A549 (cell line): ENCODE measurements at regions of chr3 and their contacts with region 1.

Region 1: GRCh38 chr3:33372218-33373081 is 67.8 kb downstream of the UBP1 start:
- DNase-seq: peak; percentile 29 to 53
- ATAC-seq: peak; percentile 70 to 78
- H3K4me3 ChIP-seq: no peak overlapping the region
- H3K27ac ChIP-seq: no peak overlapping the region
- H3K4me1 ChIP-seq: peaks cover 5% of the 10 kb centered on the region; the same call in 1 of the 3 replicates
- CTCF ChIP-seq: peak; percentile 92
- EP300 ChIP-seq: no peak
- POLR2A ChIP-seq: no peak
- RAD21 ChIP-seq: peak; percentile 88 to 89

Region 2: DNA sequence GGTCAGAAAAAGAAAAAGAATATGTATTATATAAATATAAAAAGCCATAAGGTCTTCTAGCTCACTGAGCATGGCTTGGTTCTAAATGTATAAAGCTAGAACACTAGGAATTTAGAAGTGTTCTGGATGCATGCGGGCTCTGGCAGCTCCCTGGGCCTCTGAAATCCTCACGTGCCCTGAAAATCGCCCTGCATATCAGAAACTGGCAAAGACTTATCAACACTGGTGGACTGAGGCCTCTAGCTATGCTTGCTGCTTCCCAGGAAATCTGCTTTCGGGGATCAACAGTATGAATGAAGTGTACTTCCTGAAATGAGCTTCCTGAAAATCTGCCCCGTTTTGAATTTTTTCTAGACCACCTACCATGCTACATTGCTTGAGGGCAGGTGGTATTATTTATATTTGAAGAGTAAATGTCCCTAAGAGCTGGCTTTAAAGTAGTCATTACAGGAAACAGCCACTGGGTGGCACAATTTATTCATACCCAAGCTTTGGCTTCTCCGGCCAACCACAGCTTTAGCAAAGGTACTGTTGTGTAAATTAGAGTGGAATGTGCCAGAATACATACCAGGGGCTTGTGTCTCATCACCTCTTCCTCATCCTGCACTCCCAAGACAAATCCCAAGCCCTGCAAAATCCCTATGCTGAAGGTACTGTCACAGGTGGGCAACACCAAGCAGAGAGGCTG is 241.0 kb before region 1 on chr3:
- CTCF ChIA-PET with region 1: interaction called, 187 read pairs
- POLR2A ChIA-PET with region 1: interaction called, 16 read pairs
- DNase-seq: peak; percentile 67 to 77
- ATAC-seq: peak; percentile 87 to 92
- H3K4me3 ChIP-seq: no peak overlapping the region
- H3K27ac ChIP-seq: no peak overlapping the region
- H3K4me1 ChIP-seq: 0 out of 3 replicates have a peak, but pooled peaks cover 5% of the 10 kb centered on the region
- CTCF ChIP-seq: peak; percentile 87
- EP300 ChIP-seq: no peak
- POLR2A ChIP-seq: no peak
- RAD21 ChIP-seq: peak; percentile 87 to 89

Region 3: DNA sequence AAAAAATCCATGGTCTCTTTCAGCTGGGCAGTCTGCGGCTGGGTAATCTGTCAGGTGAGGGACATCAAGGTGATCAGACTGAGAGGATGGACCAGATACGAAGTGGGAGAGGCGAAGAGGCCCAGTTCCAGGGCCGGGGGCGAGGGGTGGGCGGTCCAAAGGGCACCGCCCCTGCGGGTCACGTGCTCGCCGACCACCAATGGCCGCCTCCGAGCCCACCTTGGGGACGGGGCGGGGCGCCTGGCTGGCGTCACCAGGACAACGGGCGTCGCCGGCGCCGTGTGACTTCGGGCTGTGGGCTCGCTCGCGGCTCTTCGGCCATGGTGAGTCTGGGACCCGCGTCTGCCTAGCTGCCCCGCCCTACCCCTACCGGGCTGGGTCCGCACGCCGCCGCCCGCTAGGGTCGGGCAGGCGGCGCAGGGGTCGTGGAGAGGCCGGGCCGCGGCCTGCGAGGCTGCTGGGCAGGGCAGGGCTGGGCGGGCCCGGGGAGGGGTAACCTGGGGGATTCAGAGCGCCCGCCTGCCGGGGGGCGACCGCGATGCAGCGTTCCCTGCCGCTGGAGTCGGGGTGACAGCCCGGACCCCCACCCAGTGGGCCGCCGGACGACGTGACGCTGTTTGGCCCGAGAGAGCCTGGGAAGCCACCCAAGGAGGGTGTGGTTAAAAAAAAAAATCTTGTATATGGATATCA is 95.1 kb before region 1 on chr3 and contains the start of gene FBXL2:
- CTCF ChIA-PET with region 1: interaction called, 13 read pairs
- POLR2A ChIA-PET with region 1: no interaction called
- DNase-seq: peak; percentile 74 to 89
- ATAC-seq: peak; percentile 96 to 97
- H3K4me3 ChIP-seq: peak within 1 kb of the TSS; percentile 98
- H3K27ac ChIP-seq: peak within 1 kb of the TSS; percentile 94 to 98
- H3K4me1 ChIP-seq: peaks cover 9% of the 10 kb centered on the region; the same call in 2 of the 3 replicates
- CTCF ChIP-seq: no peak
- EP300 ChIP-seq: no peak
- POLR2A ChIP-seq: peak; percentile 76
- RAD21 ChIP-seq: no peak
- polyA plus RNA-seq, gene FBXL2: 15.7 and 18.5 TPM in 2 replicates

Region 4: DNA sequence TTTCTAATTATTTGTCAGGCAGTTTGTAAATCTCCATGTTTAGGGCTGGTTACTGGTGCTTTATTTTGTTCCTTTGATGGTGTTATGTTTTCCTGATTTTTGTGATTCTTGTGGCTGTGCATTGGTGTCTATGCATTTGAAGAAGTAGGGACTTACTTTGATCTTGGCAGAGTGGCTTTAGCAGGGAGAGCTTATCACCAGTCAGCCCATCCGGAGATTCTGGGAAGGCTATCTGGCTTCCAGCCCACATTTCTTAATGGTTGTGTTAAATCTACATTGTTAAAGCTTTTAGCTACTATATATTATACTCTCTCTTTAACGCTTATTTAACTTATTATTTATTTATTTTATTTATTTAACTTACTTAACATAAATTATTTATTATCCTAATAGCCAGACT is 60.1 kb before region 1 on chr3:
- CTCF ChIA-PET with region 1: interaction called, 17 read pairs
- POLR2A ChIA-PET with region 1: no interaction called
- DNase-seq: no peak
- ATAC-seq: no peak
- H3K4me3 ChIP-seq: no peak overlapping the region
- H3K27ac ChIP-seq: 0 out of 6 replicates have a peak overlapping the region, but pooled peaks of 1 of the 2 experiments have one; percentile 2
- H3K4me1 ChIP-seq: peaks cover 50% of the 10 kb centered on the region
- CTCF ChIP-seq: no peak
- EP300 ChIP-seq: no peak
- POLR2A ChIP-seq: no peak
- RAD21 ChIP-seq: no peak

Region 5: GRCh38 chr3:33391255-33391995 is 19.0 kb after region 1 on chr3:
- CTCF ChIA-PET with region 1: interaction called, 38 read pairs
- POLR2A ChIA-PET with region 1: no interaction called
- DNase-seq: no peak
- ATAC-seq: no peak
- H3K4me3 ChIP-seq: no peak overlapping the region
- H3K27ac ChIP-seq: peak overlapping the region; percentile 73 to 74; a peak in 5 of 6 replicates
- H3K4me1 ChIP-seq: peaks cover 49% of the 10 kb centered on the region
- CTCF ChIP-seq: no peak
- EP300 ChIP-seq: no peak
- POLR2A ChIP-seq: no peak
- RAD21 ChIP-seq: no peak

Region 6: GRCh38 chr3:33544126-33544525 is 171.7 kb after region 1 on chr3:
- CTCF ChIA-PET with region 1: no interaction called
- POLR2A ChIA-PET with region 1: no interaction called
- DNase-seq: no peak
- ATAC-seq: no peak
- H3K4me3 ChIP-seq: no peak overlapping the region
- H3K27ac ChIP-seq: no peak overlapping the region
- H3K4me1 ChIP-seq: no peaks in the 10 kb centered on the region
- CTCF ChIP-seq: no peak
- EP300 ChIP-seq: no peak
- POLR2A ChIP-seq: no peak
- RAD21 ChIP-seq: no peak

Region 7: GRCh38 chr3:34361921-34362320 is 989.5 kb after region 1 on chr3:
- CTCF ChIA-PET with region 1: no interaction called
- POLR2A ChIA-PET with region 1: no interaction called
- DNase-seq: no peak
- ATAC-seq: no peak
- H3K4me3 ChIP-seq: no peak overlapping the region
- H3K27ac ChIP-seq: no peak overlapping the region
- H3K4me1 ChIP-seq: no peaks in the 10 kb centered on the region
- CTCF ChIP-seq: no peak
- EP300 ChIP-seq: no peak
- POLR2A ChIP-seq: no peak
- RAD21 ChIP-seq: no peak